ENCODE measurements at regions of chr15 and their contacts with region 1.

Region 1: GRCh38 chr15:65298731-65299130 is 2.9 kb downstream of the RNU5A-1 start:
- DNase-seq: no peak
- H3K4me3 ChIP-seq: no peak overlapping the region
- H3K27ac ChIP-seq: no peak overlapping the region
- H3K4me1 ChIP-seq: peaks cover 8% of the 10 kb centered on the region
- H3K27me3 ChIP-seq: no peaks in the 10 kb centered on the region
- CTCF ChIP-seq: no peak
- POLR2A ChIP-seq: no peak

Region 2: DNA sequence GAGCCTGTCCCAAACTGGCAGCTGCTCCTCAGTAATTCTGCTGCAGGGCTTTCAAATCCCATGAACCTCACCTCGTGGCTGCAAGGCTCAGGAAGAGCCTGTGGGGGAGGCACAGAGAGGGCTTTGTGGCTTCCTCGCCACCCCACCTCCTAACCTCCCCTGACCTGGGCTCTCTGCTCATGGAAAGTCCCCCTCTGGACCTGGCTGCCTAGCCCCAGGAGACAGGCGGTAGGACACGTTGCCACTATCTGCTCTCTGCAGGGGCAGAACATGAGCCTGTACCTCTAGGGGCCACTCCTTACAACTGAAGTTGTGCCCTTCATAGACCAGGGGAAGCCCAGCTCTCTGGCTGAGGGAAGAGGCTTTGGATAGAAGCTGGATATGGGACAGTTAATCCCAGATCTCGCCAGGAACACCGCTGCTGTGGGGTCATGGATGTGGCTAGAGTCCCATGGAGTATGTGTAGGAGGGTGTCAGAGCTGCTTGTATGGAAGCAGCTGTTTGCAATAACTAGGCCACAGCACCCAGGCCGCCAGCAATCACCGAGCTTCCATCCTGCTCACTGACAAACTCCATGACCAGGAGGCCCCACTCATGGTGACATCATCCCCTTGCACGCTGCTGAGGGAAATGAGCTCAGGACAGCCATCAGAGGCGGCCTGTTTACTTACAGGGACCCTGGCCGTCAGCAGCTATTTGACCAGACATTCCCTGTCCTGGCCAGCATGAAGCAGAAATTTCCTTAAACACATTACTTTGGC is 53.5 kb before region 1 on chr15:
- CTCF ChIA-PET with region 1: no interaction called
- POLR2A ChIA-PET with region 1: no interaction called
- dilution Hi-C with region 1: no loop called
- intact Hi-C with region 1: no loop called
- DNase-seq: no peak
- H3K4me3 ChIP-seq: no peak overlapping the region
- H3K27ac ChIP-seq: no peak overlapping the region
- H3K4me1 ChIP-seq: no peaks in the 10 kb centered on the region
- H3K27me3 ChIP-seq: no peaks in the 10 kb centered on the region
- CTCF ChIP-seq: no peak
- POLR2A ChIP-seq: no peak

Region 3: GRCh38 chr15:65286704-65287519 is 11.8 kb before region 1 on chr15 and contains the start of gene PARP16:
- CTCF ChIA-PET with region 1: interaction called, 23 read pairs
- POLR2A ChIA-PET with region 1: interaction called, 3 read pairs
- dilution Hi-C with region 1: no loop called
- intact Hi-C with region 1: no loop called
- DNase-seq: peak; percentile 85
- H3K4me3 ChIP-seq: peak within 1 kb of the TSS; percentile 65 to 75 (median 67)
- H3K27ac ChIP-seq: peak within 1 kb of the TSS; percentile 40
- H3K4me1 ChIP-seq: peaks cover 16% of the 10 kb centered on the region
- H3K27me3 ChIP-seq: peaks cover 2% of the 10 kb centered on the region in 2 experiments
- CTCF ChIP-seq: peak in 1 of 2 donors; percentile 11
- POLR2A ChIP-seq: peak; percentile 71
- total RNA-seq, gene PARP16: 6.0 and 6.3 TPM in 2 replicates

Region 4: DNA sequence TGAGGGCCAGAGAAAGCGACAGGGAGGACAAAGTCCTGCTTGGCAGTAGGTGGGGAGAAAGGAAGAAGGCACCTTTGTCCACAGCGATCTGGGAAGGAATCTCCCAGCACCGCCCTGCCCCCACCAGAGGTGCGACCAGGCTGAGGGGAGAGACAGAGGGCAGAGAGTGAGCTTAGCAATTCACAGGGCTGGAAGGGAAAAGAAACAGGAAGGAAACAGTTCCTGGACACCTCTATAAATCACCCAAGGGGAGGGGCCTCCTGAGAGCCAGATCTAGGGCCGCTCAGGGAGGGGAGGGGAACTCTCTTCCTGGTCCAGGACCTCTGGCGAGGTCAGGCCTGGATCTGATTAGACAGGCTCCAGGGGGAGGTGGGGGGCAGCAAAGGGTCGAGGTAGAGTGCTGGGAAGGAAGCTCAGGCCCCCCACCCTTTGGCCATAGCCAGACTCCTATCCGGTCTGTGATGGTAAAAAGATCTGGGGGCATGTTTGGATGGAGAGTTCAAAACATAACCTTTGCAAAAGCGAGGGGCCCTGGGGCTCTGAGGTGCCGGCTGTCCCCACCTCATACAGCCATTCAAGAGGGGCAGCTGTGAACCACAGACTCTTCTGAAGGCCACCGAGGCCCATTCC is 41.3 kb after region 1 on chr15:
- CTCF ChIA-PET with region 1: no interaction called
- POLR2A ChIA-PET with region 1: no interaction called
- dilution Hi-C with region 1: no loop called
- intact Hi-C with region 1: no loop called
- DNase-seq: no peak
- H3K4me3 ChIP-seq: no peak overlapping the region
- H3K27ac ChIP-seq: no peak overlapping the region
- H3K4me1 ChIP-seq: peaks cover 4% of the 10 kb centered on the region
- H3K27me3 ChIP-seq: peaks cover 0 to 6% of the 10 kb centered on the region in 2 experiments
- CTCF ChIP-seq: no peak
- POLR2A ChIP-seq: no peak

Region 5: DNA sequence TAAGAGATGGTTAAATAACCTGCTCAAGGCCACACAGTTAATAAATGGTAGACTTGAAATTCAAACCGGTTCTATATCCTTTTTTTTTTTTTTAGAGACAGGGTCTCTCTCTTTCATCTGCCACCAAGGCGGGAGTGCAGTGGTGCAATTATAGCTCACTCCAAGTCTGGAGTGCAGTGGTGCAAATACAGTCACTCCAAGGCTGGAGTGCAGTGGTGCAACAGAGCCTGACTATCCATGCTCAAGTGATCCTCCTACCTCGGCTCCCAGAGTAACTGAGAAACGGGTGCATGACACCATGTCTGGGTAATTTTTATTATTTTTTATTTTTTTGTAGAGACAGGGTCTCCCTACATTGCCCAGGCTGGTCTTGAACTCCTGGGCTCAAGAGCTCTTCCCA is 195.3 kb after region 1 on chr15:
- CTCF ChIA-PET with region 1: no interaction called
- POLR2A ChIA-PET with region 1: no interaction called
- dilution Hi-C with region 1: no loop called
- intact Hi-C with region 1: no loop called
- DNase-seq: no peak
- H3K4me3 ChIP-seq: no peak overlapping the region
- H3K27ac ChIP-seq: no peak overlapping the region
- H3K4me1 ChIP-seq: no peaks in the 10 kb centered on the region
- H3K27me3 ChIP-seq: no peaks in the 10 kb centered on the region
- CTCF ChIP-seq: no peak
- POLR2A ChIP-seq: no peak

Region 6: DNA sequence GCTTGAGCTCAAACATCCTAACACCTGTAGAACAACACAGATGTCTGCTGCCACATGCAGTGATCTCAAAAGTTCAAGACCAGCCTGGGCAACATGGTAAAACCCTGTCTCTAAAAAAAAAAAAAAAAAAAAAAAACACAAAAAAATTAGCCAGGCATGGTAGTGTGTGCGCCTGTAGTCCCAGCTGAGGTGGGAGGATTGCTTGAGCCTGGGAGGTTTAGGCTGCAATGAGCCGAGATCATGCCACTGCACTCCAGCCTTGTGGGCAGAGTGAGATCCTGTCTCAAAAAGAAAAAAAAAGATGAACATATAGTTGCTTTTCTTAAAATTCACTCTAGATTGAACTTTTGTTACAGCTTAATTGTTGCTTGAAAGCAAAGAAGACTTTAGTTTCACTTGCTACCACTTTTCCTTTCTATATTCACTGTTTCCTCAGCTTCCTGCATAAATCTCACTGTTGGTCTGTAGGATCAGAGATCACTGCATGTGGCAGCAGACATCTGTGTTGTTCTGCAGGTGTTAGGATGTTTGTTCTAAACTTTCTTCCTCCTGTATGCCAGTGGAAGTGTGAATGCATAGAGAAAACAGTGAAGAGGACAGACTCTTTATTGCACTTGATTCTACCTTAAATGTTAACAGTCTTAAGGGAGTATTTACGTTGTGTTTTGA is 583.2 kb after region 1 on chr15:
- CTCF ChIA-PET with region 1: no interaction called
- POLR2A ChIA-PET with region 1: no interaction called
- dilution Hi-C with region 1: no loop called
- intact Hi-C with region 1: no loop called
- DNase-seq: peak; percentile 91
- H3K4me3 ChIP-seq: no peak overlapping the region
- H3K27ac ChIP-seq: peak overlapping the region; percentile 24
- H3K4me1 ChIP-seq: no peaks in the 10 kb centered on the region
- H3K27me3 ChIP-seq: no peaks in the 10 kb centered on the region
- CTCF ChIP-seq: no peak
- POLR2A ChIP-seq: no peak